Mammary epithelial cell (primary cell): ENCODE measurements at regions of chr20 and their contacts with region 1.

Region 1: DNA sequence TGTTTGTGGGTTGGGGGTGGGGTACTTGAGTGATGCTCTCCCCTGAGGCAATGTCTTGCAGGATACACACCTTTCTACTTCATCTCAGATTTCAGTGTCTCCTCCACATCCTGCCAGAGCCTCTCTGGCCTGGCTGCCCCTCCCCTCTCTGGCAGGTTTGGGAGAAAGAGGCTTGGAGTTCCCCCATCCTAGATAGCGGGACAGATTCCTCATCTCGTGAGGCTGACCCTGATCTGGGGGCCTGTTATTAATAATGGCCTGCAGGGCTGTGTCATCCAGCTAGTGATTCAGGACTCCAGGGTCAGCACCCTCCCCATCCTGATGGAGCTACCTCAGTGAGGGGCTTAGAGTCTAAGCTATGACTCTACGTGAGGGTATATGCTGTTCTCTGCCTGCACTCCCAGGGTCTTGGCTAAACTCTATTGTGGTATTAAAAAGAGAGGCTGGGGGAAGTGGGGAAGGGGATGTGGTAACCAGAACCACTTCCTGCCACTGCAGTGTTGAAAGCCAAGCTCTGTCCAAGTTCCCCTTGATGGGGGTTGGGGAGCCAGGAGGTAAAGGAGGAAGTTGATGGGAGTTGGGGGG is 3.7 kb upstream of the MMP9 start:
- DNase-seq: peak; percentile 86
- H3K4me3 ChIP-seq: no peak overlapping the region
- H3K27ac ChIP-seq: no peak overlapping the region
- H3K4me1 ChIP-seq: peaks cover 23% of the 10 kb centered on the region
- H3K27me3 ChIP-seq: no peaks in the 10 kb centered on the region
- CTCF ChIP-seq: no peak

Region 2: GRCh38 chr20:45993197-45993951 is 11.6 kb before region 1 on chr20:
- CTCF ChIA-PET with region 1: interaction called, 19 read pairs
- dilution Hi-C with region 1: no loop called
- in situ Hi-C with region 1: no loop called
- intact Hi-C with region 1: no loop called
- DNase-seq: peak; percentile 99
- H3K4me3 ChIP-seq: no peak overlapping the region
- H3K27ac ChIP-seq: peak overlapping the region; percentile 58
- H3K4me1 ChIP-seq: peaks cover 17% of the 10 kb centered on the region
- H3K27me3 ChIP-seq: no peaks in the 10 kb centered on the region
- CTCF ChIP-seq: no peak